IMR-90 (cell line): ENCODE measurements at regions of chr1 and their contacts with region 1.

Region 1: DNA sequence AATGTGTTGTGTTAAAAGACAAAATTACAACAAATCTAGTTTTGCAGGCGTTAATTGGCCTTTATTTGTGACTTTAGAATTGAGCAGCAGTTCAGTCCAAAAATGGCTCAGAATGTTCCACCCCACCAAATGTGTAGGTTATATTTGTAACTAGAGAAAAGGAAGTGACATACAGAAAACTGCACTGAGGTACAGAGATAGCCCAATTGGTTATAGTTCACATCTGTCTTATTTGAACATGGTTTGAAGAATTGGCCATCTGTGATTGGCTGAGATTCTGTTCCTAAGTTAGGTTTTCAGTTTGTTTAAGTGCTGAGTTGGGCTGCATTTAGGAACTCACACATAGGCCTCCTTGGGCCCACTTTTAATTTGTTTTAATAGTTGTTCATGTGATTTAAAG is 12.0 kb upstream of the FMO2 start:
- DNase-seq: no peak
- ATAC-seq: peak; percentile 46
- H3K4me3 ChIP-seq: no peak overlapping the region
- H3K27ac ChIP-seq: peak overlapping the region; percentile 81; the same call in 1 of the 2 replicates
- H3K4me1 ChIP-seq: no peaks in the 10 kb centered on the region; the same call in 1 of the 2 replicates
- H3K27me3 ChIP-seq: no peaks in the 10 kb centered on the region
- CTCF ChIP-seq: no peak
- POLR2A ChIP-seq: no peak
- RAD21 ChIP-seq: no peak

Region 2: GRCh38 chr1:171110621-171111326 is 62.3 kb before region 1 on chr1:
- CTCF ChIA-PET with region 1: no interaction called
- POLR2A ChIA-PET with region 1: no interaction called
- dilution Hi-C with region 1: no loop called
- in situ Hi-C with region 1: no loop called
- intact Hi-C with region 1: no loop called
- DNase-seq: peak; percentile 75
- ATAC-seq: peak; percentile 68
- H3K4me3 ChIP-seq: no peak overlapping the region
- H3K27ac ChIP-seq: peak overlapping the region; percentile 99; the same call in 1 of the 2 replicates
- H3K4me1 ChIP-seq: peaks cover 20% of the 10 kb centered on the region
- H3K27me3 ChIP-seq: no peaks in the 10 kb centered on the region
- CTCF ChIP-seq: no peak
- POLR2A ChIP-seq: no peak
- RAD21 ChIP-seq: no peak

Region 3: GRCh38 chr1:171128463-171128862 is 44.6 kb before region 1 on chr1:
- CTCF ChIA-PET with region 1: no interaction called
- POLR2A ChIA-PET with region 1: no interaction called
- dilution Hi-C with region 1: no loop called
- in situ Hi-C with region 1: no loop called
- intact Hi-C with region 1: loop called (anchors 1 kb)
- DNase-seq: no peak
- ATAC-seq: no peak
- H3K4me3 ChIP-seq: no peak overlapping the region
- H3K27ac ChIP-seq: peak overlapping the region; percentile 97; the same call in 1 of the 2 replicates
- H3K4me1 ChIP-seq: peaks cover 10% of the 10 kb centered on the region
- H3K27me3 ChIP-seq: no peaks in the 10 kb centered on the region
- CTCF ChIP-seq: no peak
- POLR2A ChIP-seq: no peak
- RAD21 ChIP-seq: no peak

Region 4: GRCh38 chr1:171286032-171286705 is 113.1 kb after region 1 on chr1:
- CTCF ChIA-PET with region 1: no interaction called
- POLR2A ChIA-PET with region 1: no interaction called
- dilution Hi-C with region 1: no loop called
- in situ Hi-C with region 1: no loop called
- intact Hi-C with region 1: no loop called
- DNase-seq: peak; percentile 2
- ATAC-seq: 0 out of 2 replicates have a peak, but pooled peaks have one; percentile 46
- H3K4me3 ChIP-seq: no peak overlapping the region
- H3K27ac ChIP-seq: no peak overlapping the region
- H3K4me1 ChIP-seq: no peaks in the 10 kb centered on the region
- H3K27me3 ChIP-seq: no peaks in the 10 kb centered on the region
- CTCF ChIP-seq: no peak
- POLR2A ChIP-seq: no peak
- RAD21 ChIP-seq: no peak